Left cardiac atrium (tissue), 4 donors: ENCODE measurements at regions of chr10 and their contacts with region 1.

Region 1: DNA sequence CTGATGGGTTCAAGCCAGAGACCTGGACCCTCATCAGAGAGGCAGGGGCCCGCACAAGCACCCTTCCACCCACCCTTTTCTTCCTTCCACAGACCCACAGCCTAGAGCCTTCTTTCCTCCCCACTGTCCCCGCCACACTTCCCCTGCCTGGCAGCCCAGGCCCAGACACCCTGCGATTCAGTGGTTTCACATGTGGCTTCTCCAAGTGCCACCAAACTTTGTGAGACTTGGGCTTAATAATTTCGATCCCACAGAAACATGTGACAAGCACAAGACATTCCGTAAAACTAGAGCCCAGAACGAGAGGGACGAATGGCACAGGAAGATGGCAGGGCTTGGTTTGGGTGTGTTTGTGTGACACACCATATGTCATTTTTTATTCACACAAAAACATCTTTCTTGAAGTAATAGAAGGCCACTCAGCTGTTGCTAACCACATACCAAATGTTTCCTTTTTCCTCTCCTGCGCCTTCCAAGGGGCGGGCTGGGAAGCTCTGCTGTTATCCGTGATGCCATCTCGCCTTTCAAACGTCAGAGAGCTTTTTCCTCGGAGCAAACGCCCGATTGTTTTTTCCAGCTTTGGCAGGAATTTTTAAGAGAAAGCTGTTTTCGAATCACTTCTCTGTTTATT is 162.9 kb downstream of the GRK5 start:
- DNase-seq: peak; percentile 78
- ATAC-seq: peak; percentile 39 to 49

Region 2: GRCh38 chr10:119409866-119410299 is 39.7 kb after region 1 on chr10:
- intact Hi-C with region 1: loop called in 1 of 2 experiments (anchors 5 kb)
- DNase-seq: peak; percentile 89
- ATAC-seq: peak; percentile 48 to 61

Region 3: GRCh38 chr10:119588071-119588470 is 217.8 kb after region 1 on chr10:
- intact Hi-C with region 1: no loop called
- DNase-seq: no peak
- ATAC-seq: no peak